ENCODE measurements at regions of chr11 and their contacts with region 1.

Region 1: DNA sequence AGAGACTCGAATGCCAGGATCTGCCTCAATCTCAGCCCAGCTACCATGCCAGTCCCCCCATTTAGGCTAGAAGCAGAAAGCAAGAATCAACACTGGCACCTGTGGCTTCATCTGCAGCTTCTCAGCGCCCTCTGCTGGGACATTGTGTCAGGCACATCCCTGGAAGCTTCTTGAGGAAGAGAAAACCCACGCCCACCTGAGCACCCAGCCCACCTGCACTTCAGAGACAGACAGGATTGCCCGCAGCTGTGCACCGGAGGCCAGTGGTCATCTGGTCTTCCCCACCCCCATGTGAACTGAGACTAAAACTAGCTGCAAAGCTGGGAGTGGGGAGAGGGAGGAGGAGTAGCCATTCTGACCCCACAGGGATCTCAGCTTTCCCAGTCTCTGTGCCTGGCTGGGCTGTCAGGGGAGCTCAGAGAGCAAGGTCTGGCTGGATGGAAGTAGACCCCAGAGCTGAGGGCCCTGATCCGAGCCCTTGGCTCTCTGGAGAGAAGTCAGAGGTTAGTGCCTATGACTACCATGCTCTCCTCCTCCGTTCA is 66.8 kb downstream of the FEZ1 start:
- DNase-seq: peak; percentile 63
- ATAC-seq: peak; percentile 78
- H3K4me3 ChIP-seq: peak overlapping the region; percentile 18 to 22; a peak in 3 of 4 replicates
- H3K27ac ChIP-seq: no peak overlapping the region
- H3K4me1 ChIP-seq: peaks cover 7 to 20% of the 10 kb centered on the region in 2 experiments; a peak in 3 of 4 replicates
- H3K27me3 ChIP-seq: no peaks in the 10 kb centered on the region
- CTCF ChIP-seq: peak; percentile 81 to 91 (median 86)
- POLR2A ChIP-seq: no peak
- RAD21 ChIP-seq: peak; percentile 85

Region 2: GRCh38 chr11:124875943-124876817 is 553.1 kb before region 1 on chr11:
- CTCF ChIA-PET with region 1: interaction called, 8 read pairs
- POLR2A ChIA-PET with region 1: no interaction called
- RAD21 ChIA-PET with region 1: no interaction called
- intact Hi-C with region 1: loop called (anchors 2 kb)
- DNase-seq: peak; percentile 94
- ATAC-seq: peak; percentile 91
- H3K4me3 ChIP-seq: peak overlapping the region; percentile 58 to 61
- H3K27ac ChIP-seq: peak overlapping the region; percentile 83
- H3K4me1 ChIP-seq: peaks cover 12 to 23% of the 10 kb centered on the region in 2 experiments
- H3K27me3 ChIP-seq: 0 out of 2 replicates have a peak, but pooled peaks cover 6% of the 10 kb centered on the region
- CTCF ChIP-seq: peak; percentile 58 to 67 (median 66)
- POLR2A ChIP-seq: peak; percentile 15
- RAD21 ChIP-seq: peak; percentile 34

Region 3: GRCh38 chr11:125245299-125245698 is 183.9 kb before region 1 on chr11:
- CTCF ChIA-PET with region 1: no interaction called
- POLR2A ChIA-PET with region 1: no interaction called
- RAD21 ChIA-PET with region 1: no interaction called
- intact Hi-C with region 1: no loop called
- DNase-seq: no peak
- ATAC-seq: no peak
- H3K4me3 ChIP-seq: no peak overlapping the region
- H3K27ac ChIP-seq: no peak overlapping the region
- H3K4me1 ChIP-seq: no peaks in the 10 kb centered on the region
- H3K27me3 ChIP-seq: peaks cover 14% of the 10 kb centered on the region
- CTCF ChIP-seq: no peak
- POLR2A ChIP-seq: no peak
- RAD21 ChIP-seq: no peak

Region 4: GRCh38 chr11:125287491-125288210 is 141.6 kb before region 1 on chr11:
- CTCF ChIA-PET with region 1: no interaction called
- POLR2A ChIA-PET with region 1: no interaction called
- RAD21 ChIA-PET with region 1: no interaction called
- intact Hi-C with region 1: no loop called
- DNase-seq: no peak
- ATAC-seq: no peak
- H3K4me3 ChIP-seq: no peak overlapping the region
- H3K27ac ChIP-seq: no peak overlapping the region
- H3K4me1 ChIP-seq: no peaks in the 10 kb centered on the region
- H3K27me3 ChIP-seq: peaks cover 32% of the 10 kb centered on the region
- CTCF ChIP-seq: no peak
- POLR2A ChIP-seq: no peak
- RAD21 ChIP-seq: no peak

Region 5: DNA sequence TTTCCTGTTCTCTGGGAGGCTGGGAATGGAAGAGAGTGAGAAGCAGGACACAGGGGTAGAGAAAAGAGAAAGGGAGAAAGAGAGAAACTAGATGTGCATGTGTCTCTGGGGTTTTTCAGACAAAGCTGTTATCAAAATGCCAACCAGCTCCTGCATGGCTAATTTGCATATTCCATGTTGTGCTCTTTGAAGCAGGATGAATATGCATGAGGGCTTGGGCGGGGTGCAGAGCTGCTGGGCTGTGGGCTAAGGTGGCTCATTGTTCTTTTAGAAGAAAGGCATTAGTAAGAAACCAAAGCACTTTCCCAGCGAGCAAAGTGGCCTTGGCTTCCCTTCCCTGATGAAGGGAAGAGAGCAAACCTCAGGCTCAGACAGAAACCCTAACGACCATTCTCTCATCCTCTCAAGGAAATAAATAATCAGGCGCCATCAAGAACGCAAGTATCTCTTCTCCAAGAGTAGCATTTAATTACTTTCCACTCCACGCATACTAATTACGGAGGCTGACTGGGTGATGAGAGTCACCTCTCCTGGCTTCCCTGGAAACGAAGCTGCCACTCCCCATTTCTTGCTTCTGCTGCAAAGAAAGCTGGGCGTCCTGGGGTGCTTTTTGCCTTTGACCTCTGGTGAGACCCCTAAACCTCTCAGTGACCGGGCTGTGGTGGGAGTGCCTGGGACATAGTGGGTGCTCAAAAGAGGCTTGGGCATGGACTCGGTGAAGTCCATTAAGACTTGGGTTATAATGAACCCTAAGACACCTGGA is 12.6 kb after region 1 on chr11:
- CTCF ChIA-PET with region 1: interaction called, 13 read pairs
- POLR2A ChIA-PET with region 1: interaction called, 5 read pairs
- RAD21 ChIA-PET with region 1: no interaction called
- intact Hi-C with region 1: no loop called
- DNase-seq: no peak
- ATAC-seq: no peak
- H3K4me3 ChIP-seq: no peak overlapping the region
- H3K27ac ChIP-seq: no peak overlapping the region
- H3K4me1 ChIP-seq: no peaks in the 10 kb centered on the region
- H3K27me3 ChIP-seq: peaks cover 22% of the 10 kb centered on the region
- CTCF ChIP-seq: no peak
- POLR2A ChIP-seq: no peak
- RAD21 ChIP-seq: no peak

Region 6: GRCh38 chr11:125451400-125452124 is 22.3 kb after region 1 on chr11:
- CTCF ChIA-PET with region 1: interaction called, 14 read pairs
- POLR2A ChIA-PET with region 1: no interaction called
- RAD21 ChIA-PET with region 1: no interaction called
- intact Hi-C with region 1: no loop called
- DNase-seq: no peak
- ATAC-seq: peak; percentile 71
- H3K4me3 ChIP-seq: no peak overlapping the region
- H3K27ac ChIP-seq: no peak overlapping the region
- H3K4me1 ChIP-seq: peaks cover 4 to 26% of the 10 kb centered on the region in 2 experiments; a peak in 3 of 4 replicates
- H3K27me3 ChIP-seq: no peaks in the 10 kb centered on the region
- CTCF ChIP-seq: no peak
- POLR2A ChIP-seq: no peak
- RAD21 ChIP-seq: no peak

Region 7: GRCh38 chr11:126293726-126294125 is 864.5 kb after region 1 on chr11:
- CTCF ChIA-PET with region 1: no interaction called
- POLR2A ChIA-PET with region 1: no interaction called
- RAD21 ChIA-PET with region 1: no interaction called
- intact Hi-C with region 1: no loop called
- DNase-seq: no peak
- ATAC-seq: no peak
- H3K4me3 ChIP-seq: no peak overlapping the region
- H3K27ac ChIP-seq: no peak overlapping the region
- H3K4me1 ChIP-seq: no peaks in the 10 kb centered on the region
- H3K27me3 ChIP-seq: no peaks in the 10 kb centered on the region
- CTCF ChIP-seq: no peak
- POLR2A ChIP-seq: no peak
- RAD21 ChIP-seq: no peak

Region 8: GRCh38 chr11:126465573-126466188 is 1036.4 kb after region 1 on chr11:
- CTCF ChIA-PET with region 1: no interaction called
- POLR2A ChIA-PET with region 1: no interaction called
- RAD21 ChIA-PET with region 1: no interaction called
- intact Hi-C with region 1: no loop called
- DNase-seq: no peak
- ATAC-seq: no peak
- H3K4me3 ChIP-seq: no peak overlapping the region
- H3K27ac ChIP-seq: no peak overlapping the region
- H3K4me1 ChIP-seq: no peaks in the 10 kb centered on the region
- H3K27me3 ChIP-seq: peaks cover 18% of the 10 kb centered on the region; the same call in 1 of the 2 replicates
- CTCF ChIP-seq: no peak
- POLR2A ChIP-seq: no peak
- RAD21 ChIP-seq: no peak

Measured in HCT116 (cell line).